ENCODE measurements at regions of chr6 and their contacts with region 1.

Region 1: GRCh38 chr6:16355699-16356446 is 117.5 kb downstream of the GMPR start:
- DNase-seq: no peak
- H3K4me3 ChIP-seq: no peak overlapping the region
- CTCF ChIP-seq: no peak

Region 2: DNA sequence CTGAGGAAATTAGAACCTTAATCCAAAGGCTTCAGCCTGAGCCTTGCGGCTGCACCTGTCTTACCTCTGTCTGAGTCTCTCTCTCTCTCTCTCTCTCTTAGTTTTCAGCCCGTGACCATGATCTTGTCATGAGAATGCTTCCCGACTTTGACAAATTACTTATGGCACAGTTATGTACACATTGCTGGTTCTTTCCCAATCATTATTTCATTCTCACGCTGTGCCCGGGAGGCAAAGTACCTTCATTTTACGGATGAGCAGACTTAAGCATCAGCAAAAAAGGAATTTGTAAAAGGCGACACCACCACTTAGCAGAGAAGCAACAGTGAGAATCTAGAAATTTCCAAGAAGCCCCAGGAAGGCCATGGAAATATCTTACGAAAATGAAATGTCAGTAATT is 62.9 kb before region 1 on chr6:
- in situ Hi-C with region 1: loop called (anchors 10 kb)
- DNase-seq: no peak
- H3K4me3 ChIP-seq: no peak overlapping the region
- CTCF ChIP-seq: no peak

Region 3: GRCh38 chr6:16391451-16391912 is 35.6 kb after region 1 on chr6:
- in situ Hi-C with region 1: loop called (anchors 5 kb)
- DNase-seq: no peak
- H3K4me3 ChIP-seq: no peak overlapping the region
- CTCF ChIP-seq: no peak